ENCODE measurements at regions of chr2 and their contacts with region 1.

Region 1: DNA sequence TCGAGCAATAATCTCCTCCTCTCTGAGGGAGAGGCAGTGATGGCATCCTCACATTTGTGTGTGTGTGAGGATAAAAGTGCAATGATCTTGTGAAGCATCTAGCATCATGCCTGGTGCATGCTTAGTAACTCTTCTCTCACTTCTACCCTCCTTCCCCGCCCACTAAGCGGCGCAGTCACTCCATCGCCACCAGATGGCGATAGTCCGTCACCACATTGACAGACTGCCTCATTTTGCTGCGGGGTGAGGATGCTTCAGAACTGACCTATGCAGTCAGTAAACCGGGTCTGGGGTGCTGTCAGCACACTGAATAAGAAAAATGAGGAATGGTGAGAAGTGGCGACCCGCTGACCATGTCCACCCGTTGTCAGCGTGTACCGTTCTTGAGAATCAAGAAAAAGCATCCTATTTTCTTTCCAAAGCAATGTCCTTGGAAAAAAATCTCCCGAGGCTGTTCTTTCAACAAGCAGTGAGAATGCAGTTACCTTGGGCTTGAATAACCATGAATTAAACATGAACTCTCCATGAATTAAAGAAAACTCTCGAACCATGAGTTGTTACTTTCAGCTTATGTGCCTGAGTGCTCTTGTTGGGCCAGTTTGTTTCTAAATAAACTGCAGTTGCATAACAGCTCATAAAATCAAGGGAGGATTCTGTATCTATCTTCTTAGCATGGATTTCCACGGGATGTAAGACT is 37.3 kb upstream of the TMEM177 start:
- DNase-seq: peak; percentile 85
- H3K4me3 ChIP-seq: no peak overlapping the region; a peak in 1 of 4 replicates
- H3K27ac ChIP-seq: no peak overlapping the region
- H3K4me1 ChIP-seq: peaks cover 0 to 14% of the 10 kb centered on the region in 2 experiments; a peak in 2 of 4 replicates
- H3K27me3 ChIP-seq: no peaks in the 10 kb centered on the region
- CTCF ChIP-seq: peak; percentile 95
- EP300 ChIP-seq: no peak
- RAD21 ChIP-seq: peak; percentile 87

Region 2: GRCh38 chr2:119617455-119617854 is 24.3 kb before region 1 on chr2:
- CTCF ChIA-PET with region 1: interaction called, 10 read pairs
- POLR2A ChIA-PET with region 1: no interaction called
- DNase-seq: no peak
- H3K4me3 ChIP-seq: no peak overlapping the region
- H3K27ac ChIP-seq: no peak overlapping the region
- H3K4me1 ChIP-seq: no peaks in the 10 kb centered on the region
- H3K27me3 ChIP-seq: no peaks in the 10 kb centered on the region
- CTCF ChIP-seq: no peak
- EP300 ChIP-seq: no peak
- RAD21 ChIP-seq: no peak

Region 3: GRCh38 chr2:119630121-119630520 is 11.6 kb before region 1 on chr2:
- CTCF ChIA-PET with region 1: interaction called, 25 read pairs
- POLR2A ChIA-PET with region 1: no interaction called
- DNase-seq: no peak
- H3K4me3 ChIP-seq: no peak overlapping the region
- H3K27ac ChIP-seq: no peak overlapping the region
- H3K4me1 ChIP-seq: no peaks in the 10 kb centered on the region; a peak in 1 of 4 replicates
- H3K27me3 ChIP-seq: no peaks in the 10 kb centered on the region
- CTCF ChIP-seq: no peak
- EP300 ChIP-seq: no peak
- RAD21 ChIP-seq: no peak

Region 4: DNA sequence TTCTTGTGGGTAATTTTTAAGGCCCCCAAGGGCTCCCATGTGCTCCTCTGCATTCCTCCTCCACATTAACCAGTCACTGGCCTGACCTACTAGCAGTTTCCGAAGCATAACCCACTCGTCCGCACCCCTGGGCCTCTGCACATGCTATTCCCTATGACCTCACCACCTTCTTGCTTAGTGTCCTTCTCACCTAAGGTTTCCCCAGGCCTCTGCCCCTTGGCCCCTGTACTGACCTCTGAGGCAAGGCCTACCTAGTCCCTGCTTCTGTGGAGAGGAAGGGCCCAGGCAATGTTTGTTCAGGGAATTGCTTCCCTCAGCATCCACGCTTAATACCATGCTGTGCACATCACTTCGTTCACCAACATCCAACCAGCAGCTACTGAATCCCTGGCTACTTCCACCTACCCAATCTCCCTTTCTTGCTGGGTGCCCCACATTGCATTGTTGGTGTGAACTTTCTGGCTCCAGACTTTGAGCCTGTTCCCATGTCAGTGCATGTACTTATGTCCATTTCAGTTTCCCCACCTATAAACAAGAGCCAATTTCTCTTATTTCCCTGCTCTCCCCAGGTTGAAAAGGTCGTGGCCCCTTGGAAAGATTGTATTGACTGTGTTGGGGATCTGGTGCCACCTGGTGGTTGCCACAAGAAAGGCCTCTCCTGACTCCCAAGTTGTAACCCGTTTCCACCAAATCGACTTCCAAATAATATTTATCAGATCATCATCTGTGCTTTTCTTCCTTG is 18.1 kb after region 1 on chr2:
- CTCF ChIA-PET with region 1: interaction called, 34 read pairs
- POLR2A ChIA-PET with region 1: no interaction called
- DNase-seq: peak; percentile 51
- H3K4me3 ChIP-seq: no peak overlapping the region
- H3K27ac ChIP-seq: no peak overlapping the region
- H3K4me1 ChIP-seq: no peaks in the 10 kb centered on the region
- H3K27me3 ChIP-seq: no peaks in the 10 kb centered on the region
- CTCF ChIP-seq: peak; percentile 88
- EP300 ChIP-seq: no peak
- RAD21 ChIP-seq: peak; percentile 85

Measured in SK-N-SH (cell line).